B cell (primary cell): ENCODE measurements at regions of chr6 and their contacts with region 1.

Region 1: DNA sequence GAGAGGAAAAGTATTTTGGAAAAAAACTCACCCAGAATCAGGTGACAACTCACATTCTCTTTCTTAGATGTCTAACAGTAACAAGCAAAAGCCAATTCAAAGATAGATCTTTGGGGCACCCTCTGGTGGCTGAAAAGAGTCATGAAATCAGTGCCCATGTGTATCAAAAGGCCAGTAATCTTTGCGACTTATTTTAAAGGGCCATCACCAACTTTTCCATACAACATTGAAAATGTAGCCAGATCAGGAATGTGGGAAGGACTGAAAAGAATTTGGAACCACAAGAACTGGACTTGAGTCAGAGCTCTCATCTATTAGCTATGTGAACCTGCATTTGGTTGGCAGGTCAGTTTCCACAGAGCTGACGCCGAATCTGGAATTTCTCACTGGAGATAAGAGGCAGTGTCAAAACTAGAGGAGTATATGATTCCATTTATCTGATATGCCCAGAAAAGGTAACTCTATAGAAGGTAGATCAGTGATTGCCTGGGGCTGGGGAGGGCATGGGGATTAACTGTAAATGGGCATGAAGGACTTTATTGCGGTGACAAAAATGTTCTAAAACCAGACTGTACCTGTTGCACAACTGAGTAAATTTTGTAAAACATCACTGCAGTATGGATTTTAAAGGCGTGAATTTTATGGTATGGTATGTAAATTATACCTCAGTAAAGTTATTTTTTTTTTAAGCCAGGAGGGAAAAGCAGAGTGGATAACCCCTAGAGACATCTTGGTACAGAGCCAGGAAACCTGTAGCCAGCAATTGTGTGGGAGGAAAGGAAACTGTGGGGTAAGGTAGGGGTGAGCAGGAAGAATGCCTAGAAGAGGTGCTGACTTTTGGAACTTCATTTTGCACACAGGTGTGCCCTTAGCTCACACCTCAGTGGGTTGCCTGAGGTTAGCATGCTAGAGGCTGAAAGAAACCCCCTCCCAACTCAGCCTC is 117.1 kb upstream of the ASF1A start:
- DNase-seq: peak; percentile 75
- ATAC-seq: peak; percentile 68
- H3K4me3 ChIP-seq: no peak overlapping the region
- H3K4me3 Mint-ChIP-seq: no peak overlapping the region
- H3K27ac ChIP-seq: no peak overlapping the region
- H3K27ac Mint-ChIP-seq: no peak overlapping the region
- H3K4me1 ChIP-seq: no peaks in the 10 kb centered on the region
- H3K4me1 Mint-ChIP-seq: peaks cover 6% of the 10 kb centered on the region
- H3K27me3 ChIP-seq: no peaks in the 10 kb centered on the region
- H3K27me3 Mint-ChIP-seq: peaks cover 4% of the 10 kb centered on the region
- CTCF ChIP-seq: peak; percentile 89

Region 2: GRCh38 chr6:118697554-118697953 is 79.3 kb before region 1 on chr6:
- CTCF ChIA-PET with region 1: interaction called, 23 read pairs
- POLR2A ChIA-PET with region 1: no interaction called
- intact Hi-C with region 1: loop called (anchors 1 kb)
- DNase-seq: no peak
- ATAC-seq: peak; percentile 45
- H3K4me3 ChIP-seq: no peak overlapping the region
- H3K4me3 Mint-ChIP-seq: no peak overlapping the region
- H3K27ac ChIP-seq: no peak overlapping the region
- H3K27ac Mint-ChIP-seq: no peak overlapping the region
- H3K4me1 ChIP-seq: peaks cover 4 to 7% of the 10 kb centered on the region in 2 donors
- H3K4me1 Mint-ChIP-seq: peaks cover 57% of the 10 kb centered on the region
- H3K27me3 ChIP-seq: no peaks in the 10 kb centered on the region
- H3K27me3 Mint-ChIP-seq: no peaks in the 10 kb centered on the region
- CTCF ChIP-seq: peak; percentile 23